ENCODE measurements at regions of chr1 and their contacts with region 1.

Region 1: DNA sequence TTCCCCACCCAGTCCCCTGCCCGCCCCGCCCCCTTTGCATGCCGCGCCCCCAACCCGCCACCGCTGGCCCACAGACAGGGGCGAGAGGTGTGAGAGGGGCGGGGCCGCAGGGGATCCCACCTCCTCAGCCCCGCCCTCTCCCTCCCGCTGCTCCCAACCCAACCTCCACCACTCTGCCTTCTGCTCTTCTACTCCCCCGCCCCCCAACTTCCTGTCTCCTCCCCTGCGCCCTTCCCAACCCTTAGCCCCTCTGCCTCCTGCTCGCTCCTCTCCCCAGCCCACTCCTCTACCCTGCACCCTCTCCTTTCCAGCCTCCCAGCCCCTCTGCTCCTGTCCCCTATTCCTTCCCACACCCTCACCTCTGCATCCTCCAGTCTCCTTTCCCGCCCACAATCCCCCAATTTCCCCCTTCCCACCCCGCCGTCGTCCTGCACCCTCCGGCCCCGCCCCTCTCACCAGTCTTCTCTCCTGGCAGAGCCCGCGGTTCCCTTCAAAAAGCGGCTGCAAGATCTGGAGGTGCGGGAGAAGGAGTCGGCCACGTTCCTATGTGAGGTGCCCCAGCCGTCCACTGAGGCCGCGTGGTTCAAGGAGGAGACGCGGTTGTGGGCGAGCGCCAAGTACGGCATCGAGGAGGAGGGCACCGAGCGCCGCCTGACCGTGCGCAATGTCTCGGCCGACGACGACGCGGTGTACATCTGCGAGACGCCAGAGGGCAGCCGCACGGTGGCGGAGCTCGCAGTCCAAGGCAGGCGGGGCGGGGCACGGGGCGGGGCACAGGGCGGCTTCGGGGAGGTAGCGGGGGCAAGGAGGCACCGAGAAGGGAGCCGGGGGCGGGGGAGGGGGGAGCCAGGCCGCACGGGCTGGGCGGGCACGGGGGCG is 5.4 kb downstream of the OBSCN start:
- DNase-seq: peak; percentile 96
- ATAC-seq: peak; percentile 94
- H3K4me3 Mint-ChIP-seq: peak overlapping the region; percentile 78
- H3K27ac Mint-ChIP-seq: peak overlapping the region; percentile 75
- H3K4me1 Mint-ChIP-seq: no peaks in the 10 kb centered on the region
- H3K27me3 Mint-ChIP-seq: no peaks in the 10 kb centered on the region

Region 2: GRCh38 chr1:227563324-227564201 is 649.6 kb before region 1 on chr1 and contains the start of gene ZNF678:
- CTCF ChIA-PET with region 1: no interaction called
- POLR2A ChIA-PET with region 1: no interaction called
- intact Hi-C with region 1: loop called in 1 of 2 experiments (anchors 1 kb)
- DNase-seq: peak; percentile 95
- ATAC-seq: peak; percentile 96
- H3K4me3 Mint-ChIP-seq: peak within 1 kb of the TSS; percentile 90
- H3K27ac Mint-ChIP-seq: peak within 1 kb of the TSS; percentile 93
- H3K4me1 Mint-ChIP-seq: peaks cover 34% of the 10 kb centered on the region
- H3K27me3 Mint-ChIP-seq: peaks cover 25% of the 10 kb centered on the region
- total RNA-seq, gene ZNF678: 7.0 to 7.7 TPM

Region 3: DNA sequence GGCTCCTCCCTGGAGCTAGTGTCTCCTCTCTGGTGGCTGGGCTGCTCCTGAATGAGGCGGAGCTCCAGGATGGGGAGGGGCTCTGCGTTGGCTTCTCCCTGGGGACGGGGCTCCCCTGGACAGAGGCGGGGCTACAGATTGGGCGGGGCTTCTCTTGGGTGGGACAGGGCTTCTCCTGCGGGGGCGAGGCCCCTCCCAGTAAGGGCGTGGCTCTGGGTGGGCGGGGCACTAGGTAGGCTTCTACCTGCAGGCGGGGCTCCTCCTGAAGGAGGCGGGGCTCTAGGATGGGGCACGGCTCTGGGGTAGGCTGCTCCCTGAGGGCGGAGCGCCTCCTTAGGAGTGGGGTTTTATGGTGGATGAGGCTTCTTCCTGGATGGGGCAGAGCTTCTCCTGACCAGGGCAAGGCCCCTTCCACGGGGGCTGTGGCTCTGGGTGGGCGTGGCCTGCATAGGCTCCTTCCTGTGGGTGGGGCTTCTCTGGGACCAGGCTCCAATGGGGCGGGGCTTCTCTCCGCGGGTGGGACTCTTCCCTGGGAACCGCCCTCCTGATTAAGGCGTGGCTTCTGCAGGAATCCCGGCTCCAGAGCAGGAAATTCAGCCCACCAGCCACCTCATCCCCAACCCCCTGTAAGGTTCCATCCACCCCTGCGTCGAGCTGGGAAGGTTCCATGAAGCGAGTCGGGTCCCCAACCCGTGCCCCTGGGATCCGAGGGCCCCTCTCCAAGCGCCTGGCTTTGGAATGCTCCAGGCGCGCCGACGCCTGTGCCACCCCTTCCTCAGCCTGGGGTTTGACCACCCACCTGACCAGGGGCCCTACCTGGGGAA is 153.4 kb before region 1 on chr1:
- CTCF ChIA-PET with region 1: no interaction called
- POLR2A ChIA-PET with region 1: no interaction called
- intact Hi-C with region 1: loop called in 1 of 2 experiments (anchors 1 kb)
- DNase-seq: peak; percentile 91
- ATAC-seq: peak; percentile 85
- H3K4me3 Mint-ChIP-seq: peak overlapping the region; percentile 51
- H3K27ac Mint-ChIP-seq: no peak overlapping the region
- H3K4me1 Mint-ChIP-seq: peaks cover 9% of the 10 kb centered on the region
- H3K27me3 Mint-ChIP-seq: peaks cover 30% of the 10 kb centered on the region

Region 4: DNA sequence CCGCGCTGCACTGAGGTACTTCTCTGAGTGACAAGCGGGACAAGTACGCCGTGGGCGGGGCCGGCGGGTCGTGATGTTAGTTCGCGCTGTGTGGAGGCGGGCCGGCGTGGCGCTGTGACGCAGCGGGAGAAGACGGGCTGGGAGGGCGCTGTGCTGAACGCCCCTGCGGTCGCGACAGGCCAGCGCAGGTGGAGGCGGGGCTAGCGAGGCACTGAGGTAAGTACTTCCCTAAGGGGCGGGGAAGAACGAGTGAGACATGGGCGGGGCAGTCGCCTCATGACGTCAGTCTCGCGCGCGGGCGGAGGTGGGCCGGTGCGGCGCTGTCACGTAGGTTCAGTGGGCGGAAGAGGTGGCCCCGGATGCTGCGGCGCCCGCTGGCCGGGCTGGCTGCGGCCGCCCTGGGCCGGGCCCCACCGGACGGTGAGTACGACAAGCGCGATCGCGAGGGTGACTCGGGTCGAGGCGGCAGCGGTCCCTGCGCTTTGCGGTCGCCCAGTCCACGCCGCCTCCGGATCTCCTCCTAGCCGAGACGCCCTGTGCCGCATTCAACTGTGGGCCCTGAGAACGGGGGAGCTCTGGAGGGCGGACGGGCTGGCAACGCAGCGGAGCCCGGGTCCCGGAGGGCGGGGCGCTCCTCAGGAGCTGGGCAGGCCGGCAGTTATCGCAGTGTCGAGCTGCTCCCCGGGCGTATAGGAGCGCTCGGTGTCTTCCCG is 73.1 kb before region 1 on chr1 and contains the start of gene GUK1:
- CTCF ChIA-PET with region 1: interaction called, 3 read pairs
- POLR2A ChIA-PET with region 1: no interaction called
- intact Hi-C with region 1: loop called (anchors 1 to 5 kb)
- DNase-seq: peak; percentile 100
- ATAC-seq: peak; percentile 95
- H3K4me3 Mint-ChIP-seq: peak within 1 kb of the TSS; percentile 97
- H3K27ac Mint-ChIP-seq: peak within 1 kb of the TSS; percentile 98
- H3K4me1 Mint-ChIP-seq: peaks cover 24% of the 10 kb centered on the region
- H3K27me3 Mint-ChIP-seq: peaks cover 2% of the 10 kb centered on the region
- total RNA-seq, gene GUK1: 196 to 270 TPM

Region 5: GRCh38 chr1:228224198-228225164 is 11.3 kb after region 1 on chr1:
- CTCF ChIA-PET with region 1: no interaction called
- POLR2A ChIA-PET with region 1: no interaction called
- intact Hi-C with region 1: no loop called
- DNase-seq: no peak
- ATAC-seq: no peak
- H3K4me3 Mint-ChIP-seq: no peak overlapping the region
- H3K27ac Mint-ChIP-seq: no peak overlapping the region
- H3K4me1 Mint-ChIP-seq: no peaks in the 10 kb centered on the region
- H3K27me3 Mint-ChIP-seq: no peaks in the 10 kb centered on the region

Region 6: GRCh38 chr1:228275739-228276421 is 62.7 kb after region 1 on chr1:
- CTCF ChIA-PET with region 1: interaction called, 3 read pairs
- POLR2A ChIA-PET with region 1: no interaction called
- intact Hi-C with region 1: loop called (anchors 1 kb)
- DNase-seq: peak; percentile 94
- ATAC-seq: peak; percentile 96
- H3K4me3 Mint-ChIP-seq: peak overlapping the region; percentile 71
- H3K27ac Mint-ChIP-seq: no peak overlapping the region
- H3K4me1 Mint-ChIP-seq: peaks cover 6% of the 10 kb centered on the region
- H3K27me3 Mint-ChIP-seq: no peaks in the 10 kb centered on the region

Region 7: DNA sequence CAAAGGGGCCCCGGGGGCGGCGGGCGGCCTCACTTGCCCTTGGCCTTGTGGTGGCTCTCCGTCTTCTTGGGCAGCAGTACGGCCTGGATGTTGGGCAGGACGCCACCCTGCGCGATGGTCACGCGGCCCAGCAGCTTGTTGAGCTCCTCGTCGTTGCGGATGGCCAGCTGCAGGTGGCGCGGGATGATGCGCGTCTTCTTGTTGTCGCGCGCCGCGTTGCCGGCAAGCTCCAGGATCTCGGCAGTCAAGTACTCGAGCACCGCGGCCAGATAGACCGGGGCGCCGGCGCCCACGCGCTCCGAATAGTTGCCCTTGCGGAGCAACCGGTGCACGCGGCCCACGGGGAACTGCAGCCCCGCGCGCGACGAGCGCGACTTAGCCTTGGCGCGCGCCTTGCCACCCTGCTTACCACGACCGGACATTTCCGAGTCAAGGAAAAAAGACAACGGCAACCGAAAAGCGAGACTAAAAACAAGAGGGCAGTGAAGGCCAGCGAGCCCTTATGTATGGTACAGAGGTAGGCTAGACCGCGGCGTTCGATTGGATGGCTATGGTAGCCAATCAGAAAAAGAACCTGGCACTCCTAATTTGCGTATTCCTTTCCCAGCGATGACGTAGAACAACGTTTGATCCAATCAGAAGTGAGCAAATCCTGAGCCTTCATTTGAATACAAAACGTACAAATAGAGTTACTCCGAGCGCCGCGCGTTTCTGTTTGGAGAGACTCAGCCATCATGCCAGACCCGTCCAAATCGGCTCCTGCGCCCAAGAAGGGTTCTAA is 244.4 kb after region 1 on chr1:
- CTCF ChIA-PET with region 1: no interaction called
- POLR2A ChIA-PET with region 1: no interaction called
- intact Hi-C with region 1: loop called in 1 of 2 experiments (anchors 2 kb)
- DNase-seq: peak; percentile 92
- ATAC-seq: peak; percentile 89
- H3K4me3 Mint-ChIP-seq: peak overlapping the region; percentile 88
- H3K27ac Mint-ChIP-seq: peak overlapping the region; percentile 96
- H3K4me1 Mint-ChIP-seq: peaks cover 30% of the 10 kb centered on the region
- H3K27me3 Mint-ChIP-seq: no peaks in the 10 kb centered on the region

Region 8: GRCh38 chr1:228515200-228515834 is 302.1 kb after region 1 on chr1:
- CTCF ChIA-PET with region 1: no interaction called
- POLR2A ChIA-PET with region 1: no interaction called
- intact Hi-C with region 1: loop called in 1 of 2 experiments (anchors 1 kb)
- DNase-seq: peak; percentile 45
- ATAC-seq: no peak
- H3K4me3 Mint-ChIP-seq: no peak overlapping the region
- H3K27ac Mint-ChIP-seq: no peak overlapping the region
- H3K4me1 Mint-ChIP-seq: peaks cover 8% of the 10 kb centered on the region
- H3K27me3 Mint-ChIP-seq: peaks cover 18% of the 10 kb centered on the region

Region 9: DNA sequence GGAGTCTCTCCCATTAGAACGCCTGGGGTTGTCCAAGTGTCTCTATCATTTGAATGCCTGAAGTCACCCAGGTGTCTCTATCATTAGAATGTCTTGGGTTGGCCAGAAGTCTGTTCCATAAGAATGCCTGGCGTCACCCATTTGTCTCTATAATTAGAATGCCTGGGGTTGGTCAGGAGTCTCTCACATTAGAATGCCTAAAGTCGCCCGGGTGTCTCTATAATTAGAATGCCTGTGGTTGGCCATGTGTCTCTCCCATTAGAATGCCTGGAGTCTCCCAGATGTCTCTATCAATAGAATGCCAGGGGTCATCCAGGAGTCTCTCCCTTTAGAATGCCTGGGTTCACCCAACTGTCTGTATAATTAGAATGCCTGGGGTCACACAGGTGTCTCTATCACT is 328.5 kb after region 1 on chr1:
- CTCF ChIA-PET with region 1: no interaction called
- POLR2A ChIA-PET with region 1: no interaction called
- intact Hi-C with region 1: no loop called
- DNase-seq: no peak
- ATAC-seq: no peak
- H3K4me3 Mint-ChIP-seq: no peak overlapping the region
- H3K27ac Mint-ChIP-seq: no peak overlapping the region
- H3K4me1 Mint-ChIP-seq: no peaks in the 10 kb centered on the region
- H3K27me3 Mint-ChIP-seq: peaks cover 4% of the 10 kb centered on the region

Measured in activated CD4-positive, alpha-beta T cell treated with anti-CD3 and anti-CD28 coated beads for 36 hours (primary cell).